Right ventricle myocardium inferior (tissue), 1 donor: ENCODE measurements at regions of chr2 and their contacts with region 1.

Region 1: GRCh38 chr2:58925676-58926081 is 684.6 kb upstream of the FANCL start:
- DNase-seq: no peak
- ATAC-seq: peak; percentile 61

Region 2: DNA sequence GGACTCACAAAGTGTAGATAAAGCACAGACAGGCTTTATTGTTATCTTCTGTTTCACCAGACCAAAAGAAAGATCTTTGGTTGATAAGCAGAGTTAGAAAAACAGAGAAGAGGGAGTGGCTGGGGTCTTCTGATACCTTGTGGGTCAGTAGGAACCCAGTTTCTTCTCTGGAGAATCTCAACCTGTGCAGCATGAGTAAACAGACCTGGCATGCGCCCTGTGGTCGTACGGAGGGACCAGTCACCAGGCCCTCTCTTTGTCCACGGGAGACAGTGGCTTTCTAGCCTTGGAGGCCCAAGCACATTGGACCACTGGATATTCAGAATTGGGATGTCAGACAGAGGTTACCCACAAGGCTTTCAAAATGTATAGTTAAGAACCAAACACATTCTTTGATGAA is 265.6 kb before region 1 on chr2:
- intact Hi-C with region 1: no loop called
- DNase-seq: no peak
- ATAC-seq: no peak

Region 3: GRCh38 chr2:58896638-58897037 is 29.0 kb before region 1 on chr2:
- intact Hi-C with region 1: loop called (anchors 5 kb)
- DNase-seq: no peak
- ATAC-seq: no peak

Region 4: DNA sequence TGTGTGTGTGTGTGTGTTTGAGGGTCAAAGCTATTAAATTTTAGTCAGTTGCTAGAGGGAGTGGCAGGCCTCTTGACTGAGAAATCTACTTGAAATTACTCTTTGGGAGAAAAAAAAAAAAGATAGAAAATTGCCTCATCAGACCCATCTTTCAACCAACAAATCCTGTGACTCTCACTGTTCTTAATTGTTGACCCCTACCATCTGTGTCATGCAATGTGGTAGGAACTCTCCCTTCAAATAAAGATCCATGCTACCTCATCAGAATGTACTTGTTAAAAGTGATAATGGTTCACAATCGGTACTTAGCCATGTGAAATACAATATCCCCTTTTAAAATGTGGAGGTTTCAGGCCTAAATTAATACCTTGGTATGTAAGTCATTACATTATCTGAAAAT is 13.8 kb before region 1 on chr2:
- intact Hi-C with region 1: loop called (anchors 2 kb)
- DNase-seq: no peak
- ATAC-seq: no peak